Activated CD4-positive, alpha-beta memory T cell treated with anti-CD3 and anti-CD28 coated beads for 36 hours (primary cell): ENCODE measurements at regions of chr11 and their contacts with region 1.

Region 1: GRCh38 chr11:73625696-73626318 is 20.6 kb upstream of the PLEKHB1 start:
- DNase-seq: peak; percentile 75
- H3K4me3 Mint-ChIP-seq: no peak overlapping the region
- H3K27ac Mint-ChIP-seq: no peak overlapping the region
- H3K4me1 Mint-ChIP-seq: no peaks in the 10 kb centered on the region
- H3K27me3 Mint-ChIP-seq: peaks cover 14% of the 10 kb centered on the region

Region 2: DNA sequence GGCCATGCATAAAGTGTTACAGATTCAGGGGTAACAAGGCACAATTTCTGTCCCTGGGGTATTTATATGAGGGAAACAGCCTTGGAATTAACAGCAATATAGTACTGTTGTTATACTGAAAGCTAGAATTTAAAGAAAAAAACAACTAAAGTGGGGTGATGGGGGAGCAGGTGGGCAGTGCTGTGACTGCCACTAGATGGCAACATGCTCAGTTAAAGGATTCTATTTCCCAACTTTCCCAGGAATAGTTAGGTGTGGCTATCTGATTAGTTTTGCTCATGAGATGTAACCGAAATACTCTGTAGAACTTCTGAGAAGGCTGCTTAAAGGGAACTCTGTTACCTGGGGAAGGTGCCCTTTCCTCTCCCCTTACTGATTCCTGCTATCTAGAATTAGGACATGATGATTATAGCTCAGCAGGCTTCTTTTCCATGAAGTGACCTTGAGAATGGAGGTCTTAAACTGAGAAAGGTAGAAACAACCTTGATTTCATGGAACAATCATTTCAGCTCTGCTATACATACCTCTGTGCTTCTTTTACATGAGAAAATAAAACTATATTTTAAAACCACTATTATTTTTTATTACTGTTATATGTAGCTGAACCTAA is 147.0 kb before region 1 on chr11:
- CTCF ChIA-PET with region 1: interaction called, 10 read pairs
- POLR2A ChIA-PET with region 1: interaction called, 5 read pairs
- intact Hi-C with region 1: no loop called
- DNase-seq: no peak
- H3K4me3 Mint-ChIP-seq: no peak overlapping the region
- H3K27ac Mint-ChIP-seq: no peak overlapping the region
- H3K4me1 Mint-ChIP-seq: no peaks in the 10 kb centered on the region
- H3K27me3 Mint-ChIP-seq: no peaks in the 10 kb centered on the region

Region 3: DNA sequence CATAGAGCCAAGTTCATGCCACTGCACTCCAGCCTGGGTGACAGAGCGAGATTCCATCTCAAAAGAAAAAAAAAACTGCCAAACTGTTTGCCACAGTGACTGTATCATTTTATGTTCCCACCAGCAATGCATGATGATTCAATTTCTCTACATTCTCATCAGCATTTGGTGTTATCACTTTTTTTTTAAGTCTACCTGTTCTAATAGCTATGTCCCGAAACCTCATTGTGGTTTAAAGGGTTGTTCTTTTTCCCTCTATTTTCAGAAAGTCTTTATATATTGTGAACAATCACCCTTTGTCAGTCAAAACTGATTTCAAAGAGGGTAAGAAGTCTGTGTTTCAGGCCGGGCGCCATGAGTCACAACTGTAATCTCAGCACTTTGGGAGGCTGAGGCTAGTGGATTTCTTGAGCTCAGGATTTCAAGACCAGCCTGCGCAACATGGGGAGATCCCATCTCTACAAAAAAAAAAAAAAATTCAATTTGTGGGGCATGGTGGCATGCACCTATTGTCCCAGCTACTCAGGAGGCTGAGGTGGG is 13.1 kb before region 1 on chr11:
- CTCF ChIA-PET with region 1: interaction called, 15 read pairs
- POLR2A ChIA-PET with region 1: no interaction called
- intact Hi-C with region 1: no loop called
- DNase-seq: no peak
- H3K4me3 Mint-ChIP-seq: no peak overlapping the region
- H3K27ac Mint-ChIP-seq: no peak overlapping the region
- H3K4me1 Mint-ChIP-seq: no peaks in the 10 kb centered on the region
- H3K27me3 Mint-ChIP-seq: peaks cover 9% of the 10 kb centered on the region

Region 4: GRCh38 chr11:73636249-73636648 is 10.4 kb after region 1 on chr11:
- CTCF ChIA-PET with region 1: interaction called, 13 read pairs
- POLR2A ChIA-PET with region 1: no interaction called
- intact Hi-C with region 1: no loop called
- DNase-seq: no peak
- H3K4me3 Mint-ChIP-seq: no peak overlapping the region
- H3K27ac Mint-ChIP-seq: no peak overlapping the region
- H3K4me1 Mint-ChIP-seq: peaks cover 12% of the 10 kb centered on the region
- H3K27me3 Mint-ChIP-seq: no peaks in the 10 kb centered on the region

Region 5: DNA sequence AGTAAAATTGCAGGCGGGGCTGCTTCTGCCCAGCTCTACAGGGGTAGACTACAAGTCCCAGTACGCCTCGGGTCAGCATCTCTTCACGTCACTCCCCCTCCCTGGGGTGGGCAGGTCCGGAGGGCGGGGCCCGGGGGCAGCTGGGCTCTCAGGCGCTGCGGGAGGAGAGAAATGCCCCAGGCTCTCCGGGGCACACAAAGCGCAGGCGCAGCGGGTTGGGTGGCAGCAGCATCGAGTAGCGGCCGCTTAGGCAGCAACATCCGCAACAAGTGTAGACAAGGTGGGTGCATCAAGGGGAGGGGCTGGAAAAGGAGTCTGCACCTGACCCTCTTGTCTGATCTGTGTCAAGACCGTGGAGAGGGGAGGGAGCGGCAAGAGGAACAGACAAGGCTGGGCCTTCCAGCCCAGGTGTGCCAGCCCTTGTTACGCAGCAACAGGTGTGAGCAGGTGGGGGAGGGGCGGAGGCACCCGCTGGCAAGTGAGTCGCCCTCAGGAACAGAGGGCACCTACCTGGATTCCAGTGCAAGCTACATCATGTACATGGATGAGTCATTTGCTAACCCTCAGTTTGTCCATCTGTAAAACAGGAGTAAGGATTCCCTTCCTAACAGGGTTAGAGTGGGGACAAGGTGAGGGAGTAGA is 21.8 kb after region 1 on chr11:
- CTCF ChIA-PET with region 1: interaction called, 28 read pairs
- POLR2A ChIA-PET with region 1: no interaction called
- intact Hi-C with region 1: no loop called
- DNase-seq: peak; percentile 95
- H3K4me3 Mint-ChIP-seq: peak overlapping the region; percentile 79
- H3K27ac Mint-ChIP-seq: peak overlapping the region; percentile 23
- H3K4me1 Mint-ChIP-seq: peaks cover 7% of the 10 kb centered on the region
- H3K27me3 Mint-ChIP-seq: no peaks in the 10 kb centered on the region

Region 6: DNA sequence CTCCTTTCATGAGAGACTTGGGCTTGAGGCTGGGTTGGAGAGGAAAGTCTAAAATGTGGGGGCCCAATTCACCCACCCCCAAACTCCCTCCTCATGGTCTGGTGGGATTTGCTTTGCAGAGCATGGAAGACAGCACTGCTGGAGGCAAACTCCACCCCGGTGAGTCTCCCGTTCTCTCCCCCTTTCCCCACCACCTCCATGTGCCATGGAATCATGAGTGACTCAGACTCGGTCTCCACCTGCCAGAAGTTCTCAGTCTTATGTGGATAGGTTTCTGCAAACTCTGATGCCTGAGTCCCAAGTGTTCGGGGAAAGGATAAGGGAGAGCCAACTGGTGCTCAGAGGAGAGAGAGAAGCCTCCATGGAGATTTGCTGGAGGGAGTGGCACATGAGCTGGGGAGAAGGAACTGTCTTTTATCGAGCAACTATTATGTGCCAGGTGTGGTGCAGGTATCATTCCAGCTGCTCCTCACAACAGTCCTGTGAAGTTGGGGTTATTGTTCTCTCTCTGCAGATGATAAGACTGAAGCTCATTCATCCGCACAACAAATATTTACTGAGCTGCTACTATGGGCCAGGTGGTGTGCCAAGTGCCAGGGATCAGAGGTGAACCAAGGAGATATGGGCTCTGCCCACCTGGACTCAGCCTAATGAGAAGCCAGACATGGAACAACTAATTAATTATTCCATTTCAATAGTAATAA is 27.2 kb after region 1 on chr11:
- CTCF ChIA-PET with region 1: interaction called, 28 read pairs
- POLR2A ChIA-PET with region 1: no interaction called
- intact Hi-C with region 1: no loop called
- DNase-seq: no peak
- H3K4me3 Mint-ChIP-seq: no peak overlapping the region
- H3K27ac Mint-ChIP-seq: no peak overlapping the region
- H3K4me1 Mint-ChIP-seq: no peaks in the 10 kb centered on the region
- H3K27me3 Mint-ChIP-seq: no peaks in the 10 kb centered on the region

Region 7: GRCh38 chr11:73729594-73730206 is 103.9 kb after region 1 on chr11:
- CTCF ChIA-PET with region 1: no interaction called
- POLR2A ChIA-PET with region 1: no interaction called
- intact Hi-C with region 1: no loop called
- DNase-seq: peak; percentile 22
- H3K4me3 Mint-ChIP-seq: no peak overlapping the region
- H3K27ac Mint-ChIP-seq: no peak overlapping the region
- H3K4me1 Mint-ChIP-seq: peaks cover 37% of the 10 kb centered on the region
- H3K27me3 Mint-ChIP-seq: no peaks in the 10 kb centered on the region